Posterior cingulate gyrus (tissue), 11 donors: ENCODE measurements at regions of chr6 and their contacts with region 1.

Region 1: GRCh38 chr6:156866220-156867015 is 89.2 kb downstream of the ARID1B start:
- DNase-seq: peak in 7 of 10 donors; percentile 36 to 85 (median 60)

Region 2: GRCh38 chr6:156564127-156564806 is 302.2 kb before region 1 on chr6:
- intact Hi-C with region 1: loop called (anchors 10 kb)
- DNase-seq: peak; percentile 67 to 97 (median 84)

Region 3: GRCh38 chr6:156933201-156934068 is 67.0 kb after region 1 on chr6:
- intact Hi-C with region 1: no loop called
- DNase-seq: no peak